Posterior cingulate gyrus (tissue), 11 donors: ENCODE measurements at regions of chr2 and their contacts with region 1.

Region 1: GRCh38 chr2:3575534-3576262 is 638 bp downstream of the RPS7 start:
- DNase-seq: peak in 2 of 10 donors; percentile 52 to 85

Region 2: DNA sequence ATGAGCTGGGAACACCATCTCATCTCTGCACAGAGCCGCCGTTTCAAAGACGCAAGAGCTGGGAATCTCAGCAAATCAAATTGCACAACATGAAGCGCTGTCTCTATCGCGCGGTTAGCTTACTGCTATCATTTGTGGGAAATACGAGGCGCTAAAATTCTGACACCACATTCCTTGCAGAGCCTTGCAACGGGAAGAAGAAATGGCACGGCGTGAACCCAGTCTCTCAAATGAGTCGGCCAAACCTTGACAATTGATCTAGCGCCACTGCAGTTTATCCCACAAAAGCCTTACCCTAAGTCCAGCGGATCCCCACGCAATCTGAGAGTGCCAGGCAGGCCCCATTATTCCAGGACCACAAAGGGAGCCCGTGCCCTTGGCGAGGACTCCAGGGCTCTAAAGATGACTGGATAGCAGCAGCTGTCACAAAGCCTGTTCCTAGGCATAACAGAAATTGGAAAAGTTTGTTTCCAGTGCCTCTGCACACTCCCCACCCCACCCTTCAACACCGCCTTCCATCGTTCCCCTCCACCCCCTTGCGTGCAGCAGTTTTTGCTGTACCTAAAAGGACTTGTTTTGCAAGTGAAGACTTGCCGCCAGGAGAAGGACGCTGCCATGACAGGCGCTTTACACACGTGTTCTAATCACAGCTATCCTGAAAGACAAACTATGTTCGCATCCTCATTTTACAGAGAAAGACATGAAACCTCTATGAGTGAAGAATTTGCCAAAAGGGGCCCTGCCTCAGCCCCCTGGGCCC is 450.5 kb before region 1 on chr2:
- intact Hi-C with region 1: no loop called
- DNase-seq: no peak

Region 3: DNA sequence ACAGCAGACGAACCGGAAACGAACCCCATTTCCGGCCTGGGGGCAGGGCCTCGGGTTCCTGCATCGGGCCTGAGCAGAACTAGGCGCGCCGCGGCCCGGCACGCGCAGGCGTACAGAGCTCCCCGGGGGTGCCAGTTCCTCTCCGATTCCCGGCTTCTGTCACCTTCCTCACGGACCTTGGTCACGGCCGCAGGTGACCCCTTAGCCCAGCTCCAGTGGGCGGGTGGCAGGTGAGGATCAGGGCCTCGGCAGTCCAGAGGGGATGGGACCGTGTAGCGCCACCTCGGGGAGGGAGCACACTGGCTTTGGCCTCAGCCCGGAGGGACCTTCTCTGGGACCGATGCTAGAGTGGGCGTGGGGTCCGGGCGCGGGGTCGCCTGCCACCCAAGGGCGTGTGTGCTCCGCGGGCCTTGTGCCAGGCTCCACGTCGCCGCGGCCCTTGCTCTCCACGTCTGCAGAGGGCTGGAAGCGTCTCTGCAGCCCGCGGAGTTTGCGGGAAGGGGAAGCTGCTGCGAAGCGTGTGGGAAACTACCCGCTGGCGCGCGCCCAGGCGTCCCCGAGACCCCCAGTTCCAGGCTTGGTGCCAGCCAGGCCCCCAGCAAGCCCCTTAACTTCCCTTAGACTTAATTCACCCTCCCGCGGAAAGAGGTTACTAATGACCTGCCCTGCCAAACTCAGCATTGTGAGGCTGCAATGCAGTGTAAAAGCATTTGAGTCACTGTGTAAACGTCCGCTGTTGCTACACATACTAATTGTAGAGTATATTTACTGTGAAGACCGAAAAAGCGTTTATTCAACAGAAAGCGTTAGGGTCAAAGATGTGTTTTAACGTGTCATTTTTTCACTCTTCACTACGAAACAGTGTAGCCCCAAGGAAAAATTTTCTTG is 195.8 kb before region 1 on chr2 and contains the start of gene TRAPPC12:
- intact Hi-C with region 1: loop called (anchors 2 kb)
- DNase-seq: peak; percentile 90 to 99 (median 92)

Region 4: DNA sequence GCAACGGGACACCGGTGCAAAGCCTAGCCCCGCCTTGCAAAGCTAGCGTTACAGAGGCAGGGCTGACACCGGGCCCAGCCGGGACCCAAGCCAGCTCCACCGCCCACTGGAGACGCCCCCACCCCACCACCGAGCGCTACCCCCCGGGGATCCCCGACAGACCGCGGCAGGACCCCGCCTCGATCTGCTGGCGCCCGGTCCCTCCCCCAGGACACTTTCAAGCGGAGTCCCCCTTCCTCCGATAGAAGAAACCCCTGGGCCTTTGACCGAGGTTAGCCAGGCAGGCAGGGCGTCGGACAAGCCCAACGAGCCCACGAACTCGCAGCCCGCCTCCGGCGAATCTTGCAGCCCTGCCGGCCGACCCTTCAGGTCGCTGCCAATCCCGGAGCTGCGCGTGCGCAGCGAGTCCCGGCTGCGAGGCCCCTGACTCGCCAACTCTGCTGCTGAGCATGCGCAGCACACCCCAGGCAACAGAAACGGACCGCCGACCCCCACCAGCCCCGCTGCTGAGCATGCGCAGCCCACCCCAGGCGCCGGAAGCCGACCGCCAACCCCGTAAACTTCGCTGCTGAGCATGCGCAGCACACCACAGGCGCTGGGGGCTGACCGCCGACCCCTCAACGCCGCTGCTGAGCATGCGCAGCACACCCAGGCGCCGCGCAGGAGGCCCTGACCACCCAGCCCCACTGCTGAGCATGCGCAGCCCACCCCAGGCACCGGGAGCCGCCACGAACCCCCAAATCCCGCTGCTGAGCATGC is 57.0 kb before region 1 on chr2:
- intact Hi-C with region 1: loop called (anchors 5 kb)
- DNase-seq: peak; percentile 91 to 99 (median 94)

Region 5: DNA sequence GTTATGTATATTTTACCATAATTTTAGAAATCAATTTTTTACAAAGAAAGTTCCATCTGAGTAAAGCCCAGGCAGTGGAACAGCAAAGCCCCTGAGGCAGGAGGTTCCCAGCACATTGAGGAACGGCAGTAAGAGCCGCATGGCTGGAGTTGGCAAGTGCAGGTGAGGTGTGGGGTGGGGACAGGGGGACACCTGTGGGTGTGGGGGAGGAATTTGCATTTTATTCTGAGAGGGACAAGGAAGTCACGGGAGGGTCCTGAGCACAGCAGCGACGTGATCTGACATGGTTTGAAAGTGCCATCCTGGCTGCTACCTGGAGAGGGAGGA is 40.3 kb before region 1 on chr2:
- intact Hi-C with region 1: no loop called
- DNase-seq: no peak

Region 6: GRCh38 chr2:3545788-3546478 is 29.8 kb before region 1 on chr2:
- intact Hi-C with region 1: no loop called
- DNase-seq: no peak

Region 7: DNA sequence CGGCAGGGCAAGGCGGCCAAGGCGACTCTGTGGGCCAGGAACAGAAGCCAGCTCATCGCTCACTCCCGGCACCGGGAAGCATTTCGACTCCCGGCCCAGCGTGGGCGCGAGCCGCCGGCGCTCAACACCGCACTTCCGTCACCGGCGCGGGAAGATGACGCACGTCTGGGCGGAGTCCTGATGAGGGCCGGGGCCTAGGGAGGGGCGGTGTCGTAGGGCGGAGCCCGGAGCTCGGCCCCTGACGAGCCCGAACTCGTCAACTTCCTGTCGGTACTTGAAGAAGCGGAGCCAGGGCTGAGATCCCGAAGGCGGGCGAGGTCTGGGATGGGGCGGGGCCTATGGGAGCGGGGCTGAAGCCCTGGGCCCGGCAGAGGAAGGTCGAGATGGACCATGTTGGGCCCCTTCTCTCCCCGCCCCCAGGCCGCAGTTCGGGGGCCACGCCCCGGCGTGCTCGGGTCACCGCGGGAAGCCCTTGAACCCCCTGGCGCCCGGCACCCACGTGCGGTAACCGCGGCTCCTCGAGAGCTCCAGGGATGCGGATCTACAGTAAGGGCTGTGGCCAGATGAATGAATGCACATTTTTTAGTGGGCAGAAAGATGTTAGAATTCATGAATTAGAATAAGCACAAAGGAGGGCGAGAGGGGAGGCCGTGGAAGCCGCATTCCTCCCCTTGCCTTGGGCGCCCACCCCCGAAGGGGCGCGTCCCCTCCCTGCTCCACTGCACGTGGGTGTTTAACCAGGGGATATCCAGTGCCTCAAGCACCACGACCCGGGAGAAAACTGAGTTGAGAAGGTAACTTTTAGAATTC is 17.3 kb before region 1 on chr2 and contains the start of gene RNASEH1:
- intact Hi-C with region 1: loop called (anchors 1 kb)
- DNase-seq: peak; percentile 97 to 100 (median 99)

Region 8: GRCh38 chr2:3651691-3652648 is 76.3 kb after region 1 on chr2:
- intact Hi-C with region 1: loop called (anchors 5 kb)
- DNase-seq: peak; percentile 50 to 97 (median 82)